Activated CD4-positive, alpha-beta T cell treated with anti-CD3 and anti-CD28 coated beads, Interleukin-2, amount 10 ng/mL, durations not matched to agents 24 days and 14 days (primary cell): ENCODE measurements at regions of chr16 and their contacts with region 1.

Region 1: GRCh38 chr16:23060458-23061320 is 88.6 kb downstream of the USP31 start:
- DNase-seq: peak; percentile 82
- H3K4me3 Mint-ChIP-seq: no peak overlapping the region
- H3K27ac Mint-ChIP-seq: no peak overlapping the region
- H3K4me1 Mint-ChIP-seq: peaks cover 2% of the 10 kb centered on the region
- H3K27me3 Mint-ChIP-seq: peaks cover 14% of the 10 kb centered on the region

Region 2: GRCh38 chr16:22898874-22899348 is 161.8 kb before region 1 on chr16:
- intact Hi-C with region 1: loop called (anchors 2 kb)
- DNase-seq: peak; percentile 88
- H3K4me3 Mint-ChIP-seq: no peak overlapping the region
- H3K27ac Mint-ChIP-seq: no peak overlapping the region
- H3K4me1 Mint-ChIP-seq: no peaks in the 10 kb centered on the region
- H3K27me3 Mint-ChIP-seq: peaks cover 11% of the 10 kb centered on the region